ENCODE measurements at regions of chr16 and their contacts with region 1.

Region 1: DNA sequence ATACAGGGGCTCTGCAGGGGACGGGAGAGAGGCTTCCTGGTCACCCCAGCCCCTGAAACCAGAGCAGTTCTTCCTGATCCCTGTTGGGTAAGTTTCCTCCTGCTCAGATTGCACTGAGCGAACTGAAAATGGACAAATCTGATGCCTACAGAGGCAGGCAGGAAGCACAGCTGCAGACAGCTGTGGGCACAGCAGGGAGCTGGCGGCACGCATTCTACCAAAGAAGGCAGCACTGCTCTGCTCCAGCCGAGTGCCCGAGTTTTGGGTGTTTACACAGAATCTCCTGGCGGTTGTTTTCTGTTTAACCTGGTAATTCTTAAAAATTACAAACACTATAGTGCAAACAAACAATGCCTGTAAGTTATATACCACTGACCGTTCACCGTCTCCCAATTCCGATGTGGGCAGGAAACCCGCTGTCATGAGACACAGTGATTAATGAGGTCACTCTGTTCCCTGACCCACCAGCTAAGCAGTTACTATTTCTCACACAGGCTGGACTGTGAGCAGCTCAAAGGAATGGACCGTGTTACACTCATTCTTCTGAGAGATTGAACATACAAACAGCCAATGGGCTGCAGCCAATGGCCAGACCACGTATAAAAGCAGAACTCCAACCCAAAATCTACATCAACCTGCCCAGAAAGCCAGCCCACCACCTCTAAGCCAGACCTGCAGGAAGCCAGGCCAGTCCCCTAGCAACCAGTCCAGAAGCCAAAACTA is 25.5 kb downstream of the NSMCE1 start:
- DNase-seq: peak; percentile 94
- H3K4me3 ChIP-seq: peak overlapping the region; percentile 44
- H3K27ac ChIP-seq: peak overlapping the region; percentile 96
- H3K27me3 ChIP-seq: no peaks in the 10 kb centered on the region
- CTCF ChIP-seq: peak; percentile 35

Region 2: DNA sequence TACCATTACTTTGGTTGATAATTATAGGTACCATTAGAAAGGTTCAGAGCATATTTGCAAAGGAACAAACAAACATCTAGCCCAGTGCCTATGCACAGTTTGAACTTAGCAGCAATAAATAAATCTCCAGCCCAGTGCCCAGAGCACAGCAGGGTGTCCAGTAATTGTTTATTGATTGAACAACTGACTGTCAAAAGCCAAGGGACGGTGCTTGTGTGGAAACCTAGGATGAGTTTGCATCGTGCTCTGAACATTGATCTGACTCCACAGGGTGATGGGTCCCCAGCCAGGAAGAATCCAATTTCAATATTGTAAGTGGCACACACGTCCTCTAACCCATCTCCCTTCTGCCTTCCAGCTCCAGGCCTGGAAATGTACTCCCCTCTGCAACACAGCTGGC is 801.9 kb before region 1 on chr16:
- CTCF ChIA-PET with region 1: no interaction called
- POLR2A ChIA-PET with region 1: no interaction called
- DNase-seq: no peak
- H3K4me3 ChIP-seq: no peak overlapping the region
- H3K27ac ChIP-seq: no peak overlapping the region
- H3K27me3 ChIP-seq: no peaks in the 10 kb centered on the region
- CTCF ChIP-seq: no peak

Region 3: GRCh38 chr16:27253526-27253930 is 10.5 kb after region 1 on chr16:
- CTCF ChIA-PET with region 1: no interaction called
- POLR2A ChIA-PET with region 1: interaction called, 11 read pairs
- DNase-seq: peak; percentile 51
- H3K4me3 ChIP-seq: no peak overlapping the region
- H3K27ac ChIP-seq: peak overlapping the region; percentile 90
- H3K27me3 ChIP-seq: no peaks in the 10 kb centered on the region
- CTCF ChIP-seq: no peak

Region 4: DNA sequence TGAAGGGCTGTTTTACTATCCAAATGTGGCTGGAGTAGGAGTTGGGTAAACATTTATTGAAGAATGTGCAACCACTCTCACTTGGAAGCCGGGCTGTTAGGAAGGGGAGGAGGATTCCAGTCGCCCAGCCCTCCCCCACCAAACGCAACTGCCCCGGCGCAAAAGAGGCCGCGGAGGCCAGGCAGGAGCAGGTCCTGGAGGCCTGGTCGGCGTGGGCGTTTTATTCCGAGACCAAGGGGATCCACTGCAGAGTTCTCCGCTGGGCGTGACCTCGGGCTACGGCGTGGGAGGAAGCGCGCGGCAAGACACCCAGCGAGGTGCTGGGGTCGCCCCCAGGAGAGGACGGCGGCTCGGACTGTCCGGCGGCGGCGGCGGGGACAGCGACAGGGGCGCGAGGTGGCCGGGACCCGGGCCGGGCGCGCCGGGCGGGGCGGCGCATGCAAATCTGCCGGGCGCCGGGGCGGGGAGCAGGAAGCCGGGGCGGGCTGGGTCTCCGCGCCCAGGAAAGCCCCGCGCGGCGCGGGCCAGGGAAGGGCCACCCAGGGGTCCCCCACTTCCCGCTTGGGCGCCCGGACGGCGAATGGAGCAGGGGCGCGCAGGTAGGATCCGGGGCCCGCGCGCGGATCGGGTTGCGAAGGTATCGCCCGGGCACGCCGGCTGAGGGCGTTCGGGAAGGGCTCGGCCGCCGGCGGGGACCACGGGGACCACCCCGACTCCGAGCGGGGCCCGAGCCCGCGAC is 70.6 kb after region 1 on chr16 and contains the start of gene IL4R:
- CTCF ChIA-PET with region 1: no interaction called
- POLR2A ChIA-PET with region 1: interaction called, 18 read pairs
- DNase-seq: peak; percentile 38
- H3K4me3 ChIP-seq: peak within 1 kb of the TSS; percentile 81
- H3K27ac ChIP-seq: peak within 1 kb of the TSS; percentile 85
- H3K27me3 ChIP-seq: no peaks in the 10 kb centered on the region
- CTCF ChIP-seq: no peak
- polyA plus RNA-seq, gene IL4R: 31.1 and 44.1 TPM in 2 replicates

Region 5: DNA sequence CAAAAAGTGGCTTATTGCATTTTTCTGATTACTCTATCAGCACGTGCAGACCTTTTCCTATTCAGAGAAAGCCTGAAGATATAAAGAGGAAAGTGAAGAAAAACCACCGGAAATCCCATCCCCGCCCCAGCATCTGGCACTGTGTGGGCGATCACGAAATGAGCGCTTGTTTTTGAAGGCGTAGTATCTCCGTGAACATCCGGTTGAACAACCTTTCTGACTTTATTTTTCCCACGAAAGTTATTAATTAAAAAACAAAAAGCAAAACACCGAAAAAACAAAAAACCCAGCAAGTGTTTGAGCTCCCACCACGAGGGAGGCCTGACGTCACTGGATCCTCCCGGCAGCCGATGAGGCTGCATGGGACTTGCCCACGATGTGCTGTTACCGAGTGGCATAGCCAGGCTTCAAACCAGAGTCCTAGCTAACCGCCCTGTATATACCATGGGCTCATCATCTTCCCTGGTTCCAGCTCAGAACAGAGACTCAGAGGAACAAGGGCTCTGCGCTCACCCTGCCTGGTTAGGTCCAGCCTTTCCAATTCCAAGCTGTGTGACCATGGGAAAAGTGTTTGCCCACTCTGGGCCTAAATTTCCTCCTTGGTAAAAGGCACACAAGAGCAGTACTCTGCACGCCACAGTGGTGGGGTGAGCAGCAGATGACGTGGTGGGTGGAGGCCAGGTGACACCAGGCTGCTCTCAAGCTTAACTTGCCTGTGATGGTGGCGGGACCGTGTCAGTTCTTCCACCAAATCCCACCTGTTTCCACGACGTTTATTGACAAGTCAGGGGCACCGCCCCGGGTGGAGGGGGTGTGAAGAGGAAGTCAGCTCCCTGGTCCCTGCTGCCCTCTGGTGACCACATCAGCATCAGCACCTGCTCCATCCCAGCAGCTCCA is 124.7 kb after region 1 on chr16:
- CTCF ChIA-PET with region 1: interaction called, 10 read pairs
- POLR2A ChIA-PET with region 1: no interaction called
- DNase-seq: peak; percentile 20
- H3K4me3 ChIP-seq: no peak overlapping the region
- H3K27ac ChIP-seq: peak overlapping the region; percentile 11
- H3K27me3 ChIP-seq: peaks cover 3% of the 10 kb centered on the region
- CTCF ChIP-seq: peak; percentile 81